ENCODE measurements at regions of chr1 and their contacts with region 1.

Region 1: DNA sequence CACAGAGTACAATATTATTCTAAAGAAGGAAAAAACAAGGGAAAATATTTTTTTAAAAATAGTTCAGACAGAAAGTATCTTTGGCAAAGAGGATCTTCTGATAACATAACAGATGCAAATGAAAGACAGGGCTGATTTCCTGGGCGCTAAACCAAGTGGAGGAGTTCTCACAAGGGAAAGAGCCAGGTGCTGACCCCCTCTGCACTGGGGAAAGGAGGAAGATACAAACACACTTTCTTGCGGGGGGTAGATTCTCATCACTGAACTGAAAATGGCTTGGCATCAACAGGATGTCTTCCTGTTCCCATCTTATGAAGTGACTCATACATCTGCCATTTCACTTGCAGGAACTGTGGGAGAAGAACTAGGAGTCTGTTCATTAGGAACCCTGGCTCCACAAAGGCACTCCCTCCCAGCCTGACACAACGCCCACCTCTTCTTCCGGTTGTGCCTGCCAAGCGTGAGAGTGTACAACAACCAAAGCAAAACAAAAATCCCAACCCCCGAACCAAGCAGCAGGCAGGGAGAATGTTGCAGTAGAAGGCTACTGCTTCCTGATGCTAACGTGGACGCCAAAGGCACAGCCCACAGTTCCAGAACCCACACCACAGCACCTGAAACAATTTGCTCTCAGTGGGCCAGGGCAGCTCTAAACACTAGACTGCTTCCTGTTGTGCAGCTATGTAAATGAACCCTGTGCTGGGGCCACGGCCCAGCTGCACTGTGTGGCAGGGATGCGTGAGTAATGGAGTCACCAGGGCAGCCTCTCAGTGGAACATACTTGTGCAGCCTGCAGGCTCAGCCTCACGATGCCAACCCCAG is 51.0 kb downstream of the GADD45A start:
- DNase-seq: peak; percentile 78
- ATAC-seq: peak; percentile 84

Region 2: DNA sequence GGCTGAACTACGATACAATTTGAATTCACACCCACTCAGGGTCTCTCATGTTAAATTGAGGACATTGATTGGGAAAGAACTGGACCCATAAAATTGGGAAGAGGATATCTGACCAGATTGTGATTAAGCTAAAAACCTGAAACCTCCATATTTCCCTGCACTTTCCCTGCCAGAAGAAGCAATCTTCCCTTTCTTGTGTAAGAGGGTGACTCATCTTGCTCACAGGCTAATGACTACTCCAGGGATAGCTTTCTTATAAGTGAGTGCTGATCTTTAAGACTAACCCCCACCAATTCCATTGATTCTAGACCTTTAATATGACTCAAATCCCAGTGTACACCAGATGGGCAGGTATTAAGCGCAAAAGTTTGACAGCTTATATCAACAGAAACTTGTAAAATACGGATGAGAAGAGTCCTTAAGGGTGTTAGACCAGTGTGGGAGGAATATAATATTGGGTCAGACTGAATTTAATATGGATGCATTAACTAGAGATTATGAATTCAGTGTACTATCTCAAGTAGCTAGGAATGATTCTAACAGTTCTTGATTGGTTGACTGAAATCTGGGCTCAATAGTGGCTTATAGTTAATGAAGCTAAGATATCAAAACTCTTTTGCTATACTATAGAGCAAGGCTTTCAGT is 1214.2 kb before region 1 on chr1:
- intact Hi-C with region 1: loop called (anchors 10 kb)
- DNase-seq: no peak
- ATAC-seq: peak; percentile 48

Measured in sciatic nerve (tissue), 2 donors.